ENCODE measurements at regions of chr11 and their contacts with region 1.

Region 1: DNA sequence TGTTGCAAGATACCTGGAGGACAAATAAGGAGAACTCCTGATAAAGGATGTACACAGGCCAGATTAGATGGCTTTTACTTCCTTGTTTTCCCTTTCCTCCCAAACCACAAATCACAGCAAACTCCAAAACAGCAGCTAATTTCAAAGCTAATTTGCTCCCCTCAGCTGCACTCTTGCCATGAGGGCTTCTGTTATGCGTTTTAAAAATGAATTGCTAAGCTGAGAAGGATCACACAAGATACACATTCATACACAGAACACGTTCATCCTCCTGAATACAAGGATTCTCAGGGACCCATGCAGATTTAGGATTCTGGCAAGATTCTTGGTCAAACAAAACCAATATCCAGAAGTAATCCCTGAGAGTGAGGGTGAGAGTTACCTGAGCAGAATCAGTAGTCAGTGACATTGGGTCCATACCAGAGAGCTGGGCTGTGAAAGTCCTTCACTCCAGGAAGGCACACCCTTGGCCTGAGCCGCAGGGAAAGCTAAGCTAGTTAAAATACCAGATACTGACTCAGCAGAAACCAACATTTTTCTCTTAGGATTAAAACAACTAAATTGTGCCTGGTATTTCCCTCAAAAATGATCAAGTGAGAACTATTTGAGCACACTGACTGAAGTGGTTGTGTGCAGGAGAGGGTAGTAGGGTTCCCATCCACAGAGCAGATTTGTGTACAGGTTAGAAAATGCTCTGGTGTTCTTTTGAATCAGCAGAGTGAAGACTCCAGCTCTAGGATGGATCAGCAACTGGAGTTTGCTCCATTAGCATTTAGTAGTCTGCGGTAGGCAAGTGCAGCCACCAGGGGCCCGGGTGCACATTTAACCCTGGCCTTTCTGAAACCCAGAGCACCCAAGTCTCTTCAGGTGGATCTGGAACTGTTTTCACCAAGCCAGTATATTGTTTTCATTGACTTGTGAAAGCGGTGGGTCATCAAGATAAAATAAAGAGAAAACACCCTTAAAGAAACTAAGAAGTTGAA is 100.5 kb upstream of the CLPB start:
- DNase-seq: peak; percentile 45
- ATAC-seq: peak; percentile 95
- H3K4me3 Mint-ChIP-seq: peak overlapping the region; percentile 7; the same call in 1 of the 2 replicates
- H3K27ac Mint-ChIP-seq: peak overlapping the region; percentile 75
- H3K4me1 Mint-ChIP-seq: peaks cover 28% of the 10 kb centered on the region
- H3K27me3 Mint-ChIP-seq: peaks cover 10% of the 10 kb centered on the region; the same call in 1 of the 2 replicates
- CTCF ChIP-seq: no peak

Region 2: DNA sequence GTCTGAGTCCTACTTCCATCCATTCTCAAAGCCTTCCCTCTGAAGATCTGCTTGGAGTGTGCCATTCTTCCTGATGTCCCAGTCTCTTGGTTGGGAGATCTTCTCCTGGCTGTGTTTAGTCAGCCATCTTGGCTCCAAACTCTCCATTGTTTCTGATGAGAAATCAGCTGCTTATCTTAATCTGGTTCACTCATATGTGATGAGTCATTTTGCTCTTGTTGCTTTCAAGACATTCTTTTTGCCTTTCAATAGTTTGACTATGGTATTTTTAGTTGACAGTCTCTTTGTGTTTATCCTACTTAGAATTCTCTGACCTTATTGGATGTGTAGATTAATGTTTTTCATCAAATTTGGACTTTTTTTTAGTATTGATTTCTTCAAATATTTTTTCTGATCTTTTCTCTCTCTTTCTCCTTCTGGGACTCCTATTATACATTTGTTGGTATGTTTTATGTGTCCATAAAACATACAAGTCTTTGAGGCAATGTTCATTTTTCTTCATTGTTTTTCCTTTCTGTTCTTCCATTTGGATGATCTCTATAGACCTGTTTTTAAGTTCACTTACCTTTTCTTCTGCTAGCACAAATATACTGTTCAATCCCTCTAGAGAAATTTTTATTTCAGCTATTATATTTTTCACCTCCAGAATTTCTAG is 23.3 kb before region 1 on chr11:
- CTCF ChIA-PET with region 1: no interaction called
- POLR2A ChIA-PET with region 1: no interaction called
- DNase-seq: no peak
- ATAC-seq: no peak
- H3K4me3 Mint-ChIP-seq: no peak overlapping the region
- H3K27ac Mint-ChIP-seq: no peak overlapping the region
- H3K4me1 Mint-ChIP-seq: peaks cover 9% of the 10 kb centered on the region
- H3K27me3 Mint-ChIP-seq: peaks cover 25% of the 10 kb centered on the region
- CTCF ChIP-seq: no peak

Region 3: DNA sequence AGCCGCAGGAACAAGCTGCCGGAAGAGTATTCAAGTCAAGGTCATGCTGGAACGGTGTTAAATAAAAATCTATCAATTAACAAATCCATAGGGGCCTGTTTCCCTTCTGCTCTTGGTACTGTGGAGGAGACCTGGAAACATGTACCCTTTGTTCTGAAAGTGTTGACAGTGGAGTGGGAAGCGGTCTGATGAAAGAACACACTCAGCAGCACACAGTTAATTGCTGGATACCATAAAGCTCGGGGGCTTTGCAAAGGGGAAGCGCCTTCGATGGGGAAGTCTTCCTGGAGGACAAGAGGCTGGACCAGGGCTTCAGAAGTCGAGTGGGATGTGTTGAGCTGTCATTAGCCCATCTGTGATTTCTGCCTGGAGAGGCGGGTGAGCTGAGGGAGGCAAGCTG is 12.0 kb after region 1 on chr11:
- CTCF ChIA-PET with region 1: interaction called, 12 read pairs
- POLR2A ChIA-PET with region 1: no interaction called
- DNase-seq: no peak
- ATAC-seq: no peak
- H3K4me3 Mint-ChIP-seq: no peak overlapping the region
- H3K27ac Mint-ChIP-seq: no peak overlapping the region
- H3K4me1 Mint-ChIP-seq: no peaks in the 10 kb centered on the region
- H3K27me3 Mint-ChIP-seq: peaks cover 8% of the 10 kb centered on the region
- CTCF ChIP-seq: no peak

Region 4: GRCh38 chr11:72579816-72580641 is 45.2 kb after region 1 on chr11:
- CTCF ChIA-PET with region 1: no interaction called
- POLR2A ChIA-PET with region 1: no interaction called
- DNase-seq: peak; percentile 4
- ATAC-seq: no peak
- H3K4me3 Mint-ChIP-seq: no peak overlapping the region
- H3K27ac Mint-ChIP-seq: no peak overlapping the region
- H3K4me1 Mint-ChIP-seq: peaks cover 8% of the 10 kb centered on the region
- H3K27me3 Mint-ChIP-seq: peaks cover 36% of the 10 kb centered on the region
- CTCF ChIP-seq: no peak

Measured in WTC11 (cell line).